Esophagus muscularis mucosa (tissue), 4 donors: ENCODE measurements at regions of chr18 and their contacts with region 1.

Region 1: DNA sequence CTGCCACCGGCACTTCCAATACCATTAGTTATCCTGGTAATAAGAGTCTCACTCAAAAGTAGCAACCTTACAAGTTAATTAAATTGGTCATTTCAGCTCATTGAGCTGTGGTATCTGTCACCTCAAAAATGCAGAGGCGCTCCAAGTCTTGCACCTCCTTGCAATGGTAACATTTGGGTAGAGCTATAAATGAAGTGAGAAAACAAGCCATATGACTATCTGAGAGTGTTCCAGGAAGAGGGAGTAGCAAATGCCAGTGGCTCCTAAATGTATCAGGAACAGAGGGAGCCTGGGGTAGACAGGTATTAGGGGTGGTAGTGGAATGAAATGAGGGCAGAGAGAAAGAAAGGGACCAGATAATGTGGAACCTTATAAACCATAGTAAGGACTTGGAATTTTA is 6.0 kb upstream of the ZSCAN30 start:
- DNase-seq: no peak
- H3K4me3 ChIP-seq: no peak overlapping the region
- H3K27ac ChIP-seq: no peak overlapping the region
- H3K4me1 ChIP-seq: peaks cover 10 to 15% (median 14%) of the 10 kb centered on the region in 4 donors
- H3K27me3 ChIP-seq: no peaks in the 10 kb centered on the region
- CTCF ChIP-seq: no peak
- EP300 ChIP-seq: no peak
- POLR2A ChIP-seq: no peak

Region 2: DNA sequence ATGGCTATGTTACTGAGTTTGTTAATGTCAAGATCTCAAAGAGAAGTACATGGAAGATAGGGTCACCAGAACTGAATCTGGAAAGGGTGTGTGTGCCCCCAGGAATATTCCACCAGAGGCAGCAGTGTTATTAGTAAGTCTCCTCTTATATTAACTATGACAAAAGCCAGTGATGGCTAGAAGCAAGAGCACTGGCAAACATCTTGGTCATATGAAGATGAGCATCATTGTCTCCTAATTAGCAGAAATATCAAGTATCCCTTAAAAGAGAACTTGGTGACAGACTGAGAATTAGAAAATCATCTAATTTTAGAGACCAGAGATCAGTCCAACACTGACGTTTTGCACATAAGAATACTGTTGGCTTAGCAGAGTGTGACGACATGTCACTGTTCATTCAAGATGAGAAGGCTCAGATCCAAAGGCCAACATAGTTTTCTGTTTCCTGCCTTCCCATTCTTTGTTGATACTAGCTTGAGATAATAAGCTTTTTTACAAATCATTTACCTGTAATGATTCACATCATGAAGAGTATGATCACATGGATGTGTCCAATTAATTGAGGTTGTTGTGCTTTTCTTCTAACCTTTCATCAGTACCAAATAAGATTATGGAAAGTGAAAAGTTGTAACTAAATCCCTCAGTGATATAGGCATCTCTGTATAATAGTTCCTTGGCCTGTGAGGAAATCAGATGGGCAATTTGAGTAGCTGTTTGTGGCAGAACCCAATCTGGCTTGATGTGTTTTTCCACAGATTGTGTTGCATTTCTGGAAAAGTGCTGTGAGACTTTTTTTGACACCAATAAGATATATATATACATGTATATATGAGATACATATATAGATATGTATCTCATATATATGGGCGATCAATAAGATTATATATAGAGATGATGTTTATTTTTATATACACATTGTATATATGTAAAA is 210.3 kb before region 1 on chr18:
- intact Hi-C with region 1: no loop called
- DNase-seq: no peak
- H3K4me3 ChIP-seq: no peak overlapping the region
- H3K27ac ChIP-seq: no peak overlapping the region
- H3K4me1 ChIP-seq: peaks cover 15 to 60% (median 28%) of the 10 kb centered on the region in 4 donors
- H3K27me3 ChIP-seq: no peaks in the 10 kb centered on the region
- CTCF ChIP-seq: no peak
- EP300 ChIP-seq: no peak
- POLR2A ChIP-seq: no peak

Region 3: DNA sequence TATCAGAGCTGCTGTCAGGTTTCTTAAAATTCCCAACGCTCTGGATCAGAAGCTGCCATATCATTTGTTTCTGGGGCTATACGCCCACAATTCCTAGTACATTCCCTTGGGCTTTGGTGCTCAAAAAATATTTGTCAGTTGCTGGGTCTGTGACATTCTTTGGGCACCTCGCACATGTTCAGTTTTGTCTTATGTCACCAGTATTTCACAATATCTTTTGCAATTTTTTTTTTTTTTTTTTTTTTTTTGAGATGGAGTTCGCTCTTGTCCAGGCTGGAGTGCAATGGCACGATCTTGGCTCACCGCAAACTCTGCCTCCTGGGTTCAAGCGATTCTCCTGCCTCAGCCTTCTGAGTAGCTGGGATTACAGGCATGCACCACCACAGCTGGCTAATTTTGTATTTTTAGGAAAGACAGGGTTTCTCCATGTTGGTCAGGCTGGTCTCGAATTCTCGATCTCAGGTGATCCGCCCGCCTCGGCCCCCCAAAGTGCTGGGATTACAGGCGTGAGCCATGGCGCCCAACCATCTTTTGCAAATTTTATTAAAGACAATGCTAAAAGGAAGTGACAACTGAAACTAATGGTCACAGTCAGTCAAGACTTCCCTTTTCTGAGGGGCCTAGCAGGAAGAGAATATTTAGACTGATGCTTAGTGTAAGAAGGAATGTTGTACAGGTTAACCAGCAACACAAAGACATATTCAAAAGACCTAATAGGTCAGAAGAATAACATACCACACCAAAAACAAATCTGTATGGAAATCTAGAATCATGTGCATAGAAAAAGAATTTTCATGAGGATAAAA is 48.4 kb before region 1 on chr18:
- intact Hi-C with region 1: loop called (anchors 5 kb)
- DNase-seq: no peak
- H3K4me3 ChIP-seq: no peak overlapping the region
- H3K27ac ChIP-seq: peak overlapping the region in 1 of 4 donors; percentile 7
- H3K4me1 ChIP-seq: peaks cover 3 to 7% (median 6%) of the 10 kb centered on the region in 4 donors
- H3K27me3 ChIP-seq: no peaks in the 10 kb centered on the region
- CTCF ChIP-seq: no peak
- EP300 ChIP-seq: no peak
- POLR2A ChIP-seq: no peak

Region 4: GRCh38 chr18:35747894-35748472 is 451.9 kb after region 1 on chr18:
- intact Hi-C with region 1: no loop called
- DNase-seq: no peak
- H3K4me3 ChIP-seq: no peak overlapping the region
- H3K27ac ChIP-seq: no peak overlapping the region
- H3K4me1 ChIP-seq: no peaks in the 10 kb centered on the region
- H3K27me3 ChIP-seq: no peaks in the 10 kb centered on the region
- CTCF ChIP-seq: no peak
- EP300 ChIP-seq: no peak
- POLR2A ChIP-seq: no peak